ENCODE measurements at regions of chr22 and their contacts with region 1.

Region 1: DNA sequence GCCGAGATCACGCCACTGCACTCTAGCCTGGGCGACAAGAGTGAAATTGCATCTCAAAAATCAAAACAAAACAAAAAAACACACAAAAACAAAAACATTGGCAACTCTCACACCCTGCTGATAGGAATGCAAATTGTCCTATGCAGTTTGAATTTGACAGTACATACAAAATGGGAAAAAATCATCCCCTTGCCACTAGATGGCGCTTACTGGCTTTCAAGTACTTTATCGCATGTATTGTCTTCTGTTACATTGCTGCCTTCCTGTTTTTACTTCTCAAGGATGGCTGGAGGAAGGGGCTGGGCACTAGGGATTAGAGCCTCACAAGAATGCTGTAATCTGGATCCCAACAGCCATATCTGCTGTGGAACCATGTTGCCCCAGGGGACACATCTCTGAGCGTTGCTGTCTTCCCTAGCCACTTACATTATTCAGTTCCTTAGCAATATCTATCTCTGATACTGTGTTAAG is 59.4 kb upstream of the A4GALT start:
- DNase-seq: peak; percentile 20
- H3K4me3 Mint-ChIP-seq: no peak overlapping the region
- H3K27ac Mint-ChIP-seq: no peak overlapping the region
- H3K4me1 Mint-ChIP-seq: no peaks in the 10 kb centered on the region
- H3K27me3 Mint-ChIP-seq: no peaks in the 10 kb centered on the region

Region 2: DNA sequence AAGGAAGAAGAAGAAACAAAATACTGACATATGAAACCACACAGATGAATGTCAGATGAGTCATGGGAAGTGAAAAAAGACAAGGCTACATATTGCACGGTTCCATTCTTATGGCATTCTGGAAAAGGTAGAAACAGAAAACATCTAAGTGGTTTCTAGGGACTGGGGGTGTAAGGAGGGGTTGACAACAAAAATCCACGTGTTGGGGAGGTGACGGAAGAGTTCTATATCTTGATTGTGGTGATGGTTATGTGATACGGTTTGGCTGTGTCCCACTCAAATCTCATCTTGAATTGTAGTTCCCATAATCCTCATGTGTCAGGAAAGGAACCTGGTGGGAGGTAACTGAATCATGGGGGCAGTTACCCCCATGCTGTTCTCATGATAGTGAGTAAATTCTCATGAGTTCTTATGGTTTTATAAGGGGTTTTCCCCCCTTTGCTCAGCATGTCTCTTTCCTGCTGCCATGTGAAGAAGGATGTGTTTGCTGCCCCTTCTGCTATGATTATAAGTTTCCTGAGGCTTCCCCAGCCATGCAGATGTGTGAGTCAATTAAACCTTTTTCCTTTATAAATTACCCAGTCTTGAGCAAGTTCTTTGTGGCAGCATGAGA is 83.3 kb after region 1 on chr22:
- CTCF ChIA-PET with region 1: interaction called, 16 read pairs
- POLR2A ChIA-PET with region 1: no interaction called
- intact Hi-C with region 1: loop called (anchors 10 kb)
- DNase-seq: peak; percentile 57
- H3K4me3 Mint-ChIP-seq: no peak overlapping the region
- H3K27ac Mint-ChIP-seq: peak overlapping the region; percentile 65
- H3K4me1 Mint-ChIP-seq: peaks cover 16% of the 10 kb centered on the region
- H3K27me3 Mint-ChIP-seq: no peaks in the 10 kb centered on the region

Region 3: GRCh38 chr22:42880815-42881214 is 100.7 kb after region 1 on chr22:
- CTCF ChIA-PET with region 1: no interaction called
- POLR2A ChIA-PET with region 1: no interaction called
- intact Hi-C with region 1: no loop called
- DNase-seq: no peak
- H3K4me3 Mint-ChIP-seq: no peak overlapping the region
- H3K27ac Mint-ChIP-seq: no peak overlapping the region
- H3K4me1 Mint-ChIP-seq: no peaks in the 10 kb centered on the region
- H3K27me3 Mint-ChIP-seq: no peaks in the 10 kb centered on the region

Region 4: GRCh38 chr22:43036282-43036829 is 256.3 kb after region 1 on chr22:
- CTCF ChIA-PET with region 1: interaction called, 15 read pairs
- POLR2A ChIA-PET with region 1: no interaction called
- intact Hi-C with region 1: loop called (anchors 1 kb)
- DNase-seq: no peak
- H3K4me3 Mint-ChIP-seq: no peak overlapping the region
- H3K27ac Mint-ChIP-seq: no peak overlapping the region
- H3K4me1 Mint-ChIP-seq: peaks cover 2% of the 10 kb centered on the region
- H3K27me3 Mint-ChIP-seq: no peaks in the 10 kb centered on the region

Region 5: GRCh38 chr22:43060183-43060582 is 280.1 kb after region 1 on chr22:
- CTCF ChIA-PET with region 1: interaction called, 6 read pairs
- POLR2A ChIA-PET with region 1: no interaction called
- intact Hi-C with region 1: loop called (anchors 1 kb)
- DNase-seq: peak; percentile 71
- H3K4me3 Mint-ChIP-seq: no peak overlapping the region
- H3K27ac Mint-ChIP-seq: no peak overlapping the region
- H3K4me1 Mint-ChIP-seq: no peaks in the 10 kb centered on the region
- H3K27me3 Mint-ChIP-seq: no peaks in the 10 kb centered on the region

Region 6: GRCh38 chr22:43088979-43089717 is 309.0 kb after region 1 on chr22 and contains the start of gene TTLL1:
- CTCF ChIA-PET with region 1: interaction called, 10 read pairs
- POLR2A ChIA-PET with region 1: no interaction called
- intact Hi-C with region 1: no loop called
- DNase-seq: peak; percentile 94
- H3K4me3 Mint-ChIP-seq: peak within 1 kb of the TSS; percentile 97
- H3K27ac Mint-ChIP-seq: peak within 1 kb of the TSS; percentile 90
- H3K4me1 Mint-ChIP-seq: peaks cover 20% of the 10 kb centered on the region
- H3K27me3 Mint-ChIP-seq: no peaks in the 10 kb centered on the region
- total RNA-seq, gene TTLL1: 6.1 to 6.7 TPM

Measured in activated CD4-positive, alpha-beta memory T cell treated with anti-CD3 and anti-CD28 coated beads for 36 hours (primary cell).